K562 (cell line): ENCODE measurements at regions of chr7 and their contacts with region 1.

Region 1: GRCh38 chr7:151341357-151342101 is at the start of gene NUB1:
- DNase-seq: peak; percentile 97 to 100 (median 98)
- ATAC-seq: peak; percentile 98
- H3K4me3 ChIP-seq: peak within 1 kb of the TSS; percentile 74
- H3K27ac ChIP-seq: peak within 1 kb of the TSS; percentile 62; the same call in 2 of the 3 replicates
- H3K4me1 ChIP-seq: peaks cover 5 to 9% of the 10 kb centered on the region in 2 experiments; a peak in 3 of 5 replicates
- H3K27me3 ChIP-seq: peaks cover 0 to 3% of the 10 kb centered on the region in 2 experiments; a peak in 2 of 5 replicates
- CTCF ChIP-seq: no peak
- EP300 ChIP-seq: 0 out of 2 replicates have a peak, but pooled peaks have one; percentile 16
- POLR2A ChIP-seq: peak; percentile 86
- RAD21 ChIP-seq: no peak
- polyA plus RNA-seq, gene NUB1: 43.2 to 63.4 TPM

Region 2: GRCh38 chr7:151327659-151328058 is 13.9 kb before region 1 on chr7:
- CTCF ChIA-PET with region 1: no interaction called
- POLR2A ChIA-PET with region 1: interaction called, 10 read pairs
- in situ Hi-C with region 1: no loop called
- intact Hi-C with region 1: no loop called
- DNase-seq: no peak
- ATAC-seq: no peak
- H3K4me3 ChIP-seq: no peak overlapping the region
- H3K27ac ChIP-seq: no peak overlapping the region
- H3K4me1 ChIP-seq: no peaks in the 10 kb centered on the region
- H3K27me3 ChIP-seq: peaks cover 4 to 14% of the 10 kb centered on the region in 2 experiments; a peak in 3 of 5 replicates
- CTCF ChIP-seq: no peak
- EP300 ChIP-seq: no peak
- POLR2A ChIP-seq: no peak
- RAD21 ChIP-seq: no peak

Region 3: GRCh38 chr7:151381348-151382078 is 40.0 kb after region 1 on chr7:
- CTCF ChIA-PET with region 1: no interaction called
- POLR2A ChIA-PET with region 1: no interaction called
- in situ Hi-C with region 1: no loop called
- intact Hi-C with region 1: no loop called
- DNase-seq: no peak
- ATAC-seq: no peak
- H3K4me3 ChIP-seq: no peak overlapping the region
- H3K27ac ChIP-seq: no peak overlapping the region
- H3K4me1 ChIP-seq: peaks cover 0 to 58% of the 10 kb centered on the region in 2 experiments; a peak in 3 of 5 replicates
- H3K27me3 ChIP-seq: peaks cover 11 to 46% of the 10 kb centered on the region in 2 experiments; a peak in 3 of 5 replicates
- CTCF ChIP-seq: no peak
- EP300 ChIP-seq: no peak
- POLR2A ChIP-seq: no peak
- RAD21 ChIP-seq: no peak